Pancreas (tissue), 10 donors: ENCODE measurements at regions of chr9 and their contacts with region 1.

Region 1: GRCh38 chr9:136849038-136849959 is at the start of gene PHPT1:
- DNase-seq: peak; percentile 96 to 100 (median 99)
- ATAC-seq: peak; percentile 80 to 90 (median 82)
- H3K4me3 ChIP-seq: peak within 1 kb of the TSS; percentile 66 to 94 (median 90)
- H3K27ac ChIP-seq: peak within 1 kb of the TSS; percentile 74 to 93 (median 90)
- H3K4me1 ChIP-seq: peaks cover 24 to 25% (median 24%) of the 10 kb centered on the region in 3 donors
- H3K27me3 ChIP-seq: no peaks in the 10 kb centered on the region
- CTCF ChIP-seq: no peak
- total RNA-seq, gene PHPT1: 75.2 to 95.5 (median 79.0) TPM

Region 2: GRCh38 chr9:136614372-136614922 is 234.9 kb before region 1 on chr9:
- intact Hi-C with region 1: no loop called
- DNase-seq: peak in 1 of 6 donors; percentile 68
- ATAC-seq: peak in 2 of 4 donors; percentile 9 to 37
- H3K4me3 ChIP-seq: no peak overlapping the region
- H3K27ac ChIP-seq: peak overlapping the region in 1 of 4 donors; percentile 6
- H3K4me1 ChIP-seq: peaks cover 0 to 2% (median 0%) of the 10 kb centered on the region in 3 donors
- H3K27me3 ChIP-seq: no peaks in the 10 kb centered on the region
- CTCF ChIP-seq: no peak

Region 3: DNA sequence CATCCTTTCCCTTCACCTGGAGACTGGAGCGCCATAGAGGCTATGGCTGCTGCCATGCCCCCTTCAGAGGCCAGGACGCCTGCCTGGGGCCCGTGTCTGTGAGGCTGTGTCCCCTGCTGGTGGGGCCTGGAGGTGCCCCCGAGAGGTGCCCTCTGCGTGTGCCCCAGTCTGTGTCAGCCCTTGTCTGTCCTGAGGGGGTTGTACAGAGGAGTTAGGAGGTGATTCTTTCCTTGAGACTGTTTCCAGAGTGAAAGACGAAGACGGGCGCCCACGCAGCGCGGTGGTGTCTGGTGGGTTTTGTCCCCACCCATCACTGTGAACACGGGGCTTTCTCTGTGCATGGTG is 61.6 kb after region 1 on chr9:
- intact Hi-C with region 1: no loop called
- DNase-seq: peak in 1 of 6 donors; percentile 41
- ATAC-seq: no peak
- H3K4me3 ChIP-seq: no peak overlapping the region
- H3K27ac ChIP-seq: no peak overlapping the region
- H3K4me1 ChIP-seq: no peaks in the 10 kb centered on the region
- H3K27me3 ChIP-seq: no peaks in the 10 kb centered on the region
- CTCF ChIP-seq: no peak

Region 4: GRCh38 chr9:136944519-136945279 is 95.4 kb after region 1 on chr9 and contains the starts of genes C8G and FBXW5:
- intact Hi-C with region 1: loop called in 1 of 3 experiments (anchors 10 kb)
- DNase-seq: peak; percentile 92 to 99 (median 97)
- ATAC-seq: peak; percentile 87 to 88 (median 87)
- H3K4me3 ChIP-seq: peak within 1 kb of the TSS; percentile 85 to 92 (median 88)
- H3K27ac ChIP-seq: peak within 1 kb of the TSS; percentile 35 to 75 (median 69)
- H3K4me1 ChIP-seq: peaks cover 0 to 10% (median 0%) of the 10 kb centered on the region in 3 donors
- H3K27me3 ChIP-seq: no peaks in the 10 kb centered on the region
- CTCF ChIP-seq: peak; percentile 98 to 100 (median 99)
- total RNA-seq, gene C8G: 0.24 to 1.2 (median 0.43) TPM in 5 of 6 donors, not detected in the other
- total RNA-seq, gene FBXW5: 56.2 to 80.2 (median 60.4) TPM

Region 5: DNA sequence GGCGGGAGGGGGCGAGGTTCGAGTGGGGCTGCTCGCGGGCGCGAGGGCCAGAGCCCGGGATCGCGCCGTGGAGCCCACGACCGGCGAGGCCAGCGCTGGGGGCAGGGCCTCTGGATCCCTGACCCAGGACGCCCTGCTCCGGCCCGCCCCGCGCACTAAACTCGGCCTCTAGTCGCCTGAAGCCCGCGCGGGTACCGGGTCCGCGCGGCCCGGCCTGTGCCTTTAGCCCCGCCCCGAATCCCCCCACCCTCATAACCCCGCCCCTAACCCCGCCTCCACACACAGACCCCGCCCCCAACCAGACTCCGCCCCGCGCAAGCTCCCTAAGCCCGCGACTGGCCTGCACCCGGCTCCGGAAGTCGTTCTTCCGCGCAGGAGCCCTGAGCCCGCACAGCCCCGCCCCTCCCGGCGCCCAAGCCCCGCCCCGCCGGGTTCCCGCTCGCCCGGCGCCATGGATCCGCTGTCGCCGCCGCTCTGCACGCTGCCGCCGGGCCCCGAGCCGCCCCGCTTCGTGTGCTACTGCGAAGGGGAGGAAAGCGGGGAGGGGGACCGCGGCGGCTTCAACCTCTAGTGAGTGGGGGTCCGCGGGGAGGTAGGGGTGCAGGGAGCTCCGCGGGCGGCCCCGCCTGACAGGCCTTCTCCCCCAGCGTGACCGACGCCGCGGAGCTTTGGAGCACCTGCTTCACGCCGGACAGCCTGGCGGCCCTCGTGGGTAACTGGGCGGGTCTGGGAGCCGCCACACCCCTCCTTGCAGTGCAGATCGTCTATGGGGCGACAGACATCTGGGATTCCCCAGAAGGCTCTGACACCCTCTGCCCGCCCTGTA is 142.9 kb after region 1 on chr9 and contains the start of gene PAXX:
- intact Hi-C with region 1: no loop called
- DNase-seq: peak; percentile 91 to 98 (median 94)
- ATAC-seq: peak; percentile 95 to 96 (median 96)
- H3K4me3 ChIP-seq: peak within 1 kb of the TSS; percentile 79 to 91 (median 85)
- H3K27ac ChIP-seq: peak within 1 kb of the TSS; percentile 42 to 88 (median 68)
- H3K4me1 ChIP-seq: peaks cover 0 to 7% (median 7%) of the 10 kb centered on the region in 3 donors
- H3K27me3 ChIP-seq: no peaks in the 10 kb centered on the region
- CTCF ChIP-seq: no peak
- total RNA-seq, gene PAXX: 16.0 to 23.5 (median 20.0) TPM